ENCODE measurements at regions of chr5 and their contacts with region 1.

Region 1: DNA sequence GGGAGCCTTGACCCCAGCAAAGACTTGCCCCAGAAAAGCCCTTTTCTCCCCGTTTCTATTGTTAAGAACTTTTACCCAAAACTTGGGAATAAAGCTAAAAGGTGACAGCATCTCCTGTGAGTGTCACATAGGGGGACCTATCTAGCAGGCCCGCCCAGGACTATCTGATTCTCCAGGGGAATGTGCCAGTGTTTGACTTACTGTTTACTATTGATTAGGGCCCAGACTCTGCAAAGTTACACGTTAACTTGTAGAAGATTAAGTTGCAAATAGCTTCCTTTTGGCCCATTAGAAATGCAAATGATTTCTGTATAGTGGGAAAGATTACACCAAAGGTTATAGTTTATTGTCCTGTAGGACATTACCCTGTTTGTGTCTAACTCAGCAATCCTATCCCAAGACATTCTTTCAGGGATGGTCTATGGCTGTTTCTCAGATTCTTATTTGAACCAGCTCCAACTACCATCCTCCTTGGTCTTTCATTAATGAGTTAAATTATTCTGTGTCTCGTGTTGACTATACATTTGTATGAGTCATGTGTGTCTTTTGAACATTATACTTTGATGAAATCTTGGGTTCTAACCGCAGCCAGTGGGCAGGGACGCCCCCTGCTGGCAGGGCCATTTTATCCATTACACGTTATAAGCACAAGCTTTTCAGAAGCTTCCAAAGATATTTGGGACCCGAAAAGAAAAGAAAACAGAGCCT is 60.7 kb downstream of the HRH2 start:
- DNase-seq: peak; percentile 68
- H3K4me3 Mint-ChIP-seq: no peak overlapping the region
- H3K27ac Mint-ChIP-seq: no peak overlapping the region
- H3K4me1 Mint-ChIP-seq: peaks cover 4% of the 10 kb centered on the region
- H3K27me3 Mint-ChIP-seq: no peaks in the 10 kb centered on the region

Region 2: DNA sequence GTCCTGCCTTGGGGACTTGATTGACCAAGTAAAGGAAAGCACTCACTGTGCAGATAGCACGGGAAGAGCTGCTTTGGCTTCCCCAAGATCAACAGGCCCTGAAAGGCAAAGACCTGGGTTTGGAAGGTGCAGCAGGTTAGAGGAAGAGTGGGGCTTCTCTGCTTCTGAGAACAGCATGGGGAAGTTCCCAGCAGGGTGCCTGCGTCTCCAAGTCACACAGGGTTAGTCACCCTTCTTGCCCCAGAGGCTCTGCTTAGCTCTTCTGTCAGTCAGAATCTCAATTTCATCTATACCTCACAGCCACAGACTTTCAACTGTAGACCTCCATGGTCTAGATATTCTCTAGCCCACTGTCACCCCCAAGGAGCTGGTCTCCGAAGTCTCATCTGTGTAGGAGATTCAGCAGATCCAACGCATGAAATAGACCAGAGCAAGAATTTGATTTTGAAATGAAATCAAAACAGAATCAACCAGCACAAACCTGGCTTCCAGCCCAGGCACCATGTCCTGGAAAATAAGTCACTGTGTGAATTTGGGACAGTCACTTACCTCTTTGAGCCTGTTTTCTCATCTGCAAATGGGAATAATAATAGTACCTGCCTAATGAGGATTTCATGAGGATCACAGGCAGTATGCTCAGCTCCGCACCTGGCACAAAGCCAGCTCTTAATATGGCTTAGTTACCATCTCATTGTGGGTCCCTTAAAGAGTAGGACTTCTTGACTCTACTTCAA is 176.2 kb before region 1 on chr5:
- CTCF ChIA-PET with region 1: interaction called, 10 read pairs
- POLR2A ChIA-PET with region 1: no interaction called
- DNase-seq: no peak
- H3K4me3 Mint-ChIP-seq: no peak overlapping the region
- H3K27ac Mint-ChIP-seq: no peak overlapping the region
- H3K4me1 Mint-ChIP-seq: peaks cover 24% of the 10 kb centered on the region
- H3K27me3 Mint-ChIP-seq: peaks cover 1% of the 10 kb centered on the region

Region 3: DNA sequence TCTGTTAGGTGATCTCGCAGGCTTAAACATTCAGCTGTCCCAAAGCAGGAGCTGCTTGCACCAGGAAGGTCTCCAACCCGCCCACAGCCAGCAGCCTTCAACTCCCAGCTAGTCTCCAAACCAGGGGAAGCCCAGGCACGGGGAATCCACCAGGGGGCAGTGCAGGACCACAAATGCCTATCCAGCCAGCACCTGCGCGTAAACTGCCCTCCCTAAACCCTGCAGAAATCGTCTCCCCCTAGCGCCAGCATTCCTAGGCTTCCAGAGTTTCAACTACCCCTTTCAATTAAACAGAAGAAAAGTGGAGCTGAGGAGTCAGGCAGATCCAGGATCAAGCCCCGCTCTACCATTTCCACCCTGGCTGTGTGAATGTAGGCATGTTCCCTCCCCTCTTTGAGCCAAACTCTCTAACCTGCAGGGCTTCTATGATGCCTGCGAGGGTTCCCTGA is 11.3 kb after region 1 on chr5:
- CTCF ChIA-PET with region 1: interaction called, 19 read pairs
- POLR2A ChIA-PET with region 1: no interaction called
- DNase-seq: peak; percentile 93
- H3K4me3 Mint-ChIP-seq: no peak overlapping the region
- H3K27ac Mint-ChIP-seq: no peak overlapping the region
- H3K4me1 Mint-ChIP-seq: peaks cover 6% of the 10 kb centered on the region
- H3K27me3 Mint-ChIP-seq: peaks cover 12% of the 10 kb centered on the region

Region 4: GRCh38 chr5:175750511-175750931 is 32.0 kb after region 1 on chr5:
- CTCF ChIA-PET with region 1: no interaction called
- POLR2A ChIA-PET with region 1: no interaction called
- DNase-seq: no peak
- H3K4me3 Mint-ChIP-seq: no peak overlapping the region
- H3K27ac Mint-ChIP-seq: no peak overlapping the region
- H3K4me1 Mint-ChIP-seq: no peaks in the 10 kb centered on the region
- H3K27me3 Mint-ChIP-seq: peaks cover 33% of the 10 kb centered on the region

Measured in activated CD4-positive, alpha-beta T cell treated with anti-CD3 and anti-CD28 coated beads, Interleukin-2, amount 10 ng/mL, durations not matched to agents 7 days and 5 days (primary cell).